ENCODE measurements at regions of chr2 and their contacts with region 1.

Region 1: DNA sequence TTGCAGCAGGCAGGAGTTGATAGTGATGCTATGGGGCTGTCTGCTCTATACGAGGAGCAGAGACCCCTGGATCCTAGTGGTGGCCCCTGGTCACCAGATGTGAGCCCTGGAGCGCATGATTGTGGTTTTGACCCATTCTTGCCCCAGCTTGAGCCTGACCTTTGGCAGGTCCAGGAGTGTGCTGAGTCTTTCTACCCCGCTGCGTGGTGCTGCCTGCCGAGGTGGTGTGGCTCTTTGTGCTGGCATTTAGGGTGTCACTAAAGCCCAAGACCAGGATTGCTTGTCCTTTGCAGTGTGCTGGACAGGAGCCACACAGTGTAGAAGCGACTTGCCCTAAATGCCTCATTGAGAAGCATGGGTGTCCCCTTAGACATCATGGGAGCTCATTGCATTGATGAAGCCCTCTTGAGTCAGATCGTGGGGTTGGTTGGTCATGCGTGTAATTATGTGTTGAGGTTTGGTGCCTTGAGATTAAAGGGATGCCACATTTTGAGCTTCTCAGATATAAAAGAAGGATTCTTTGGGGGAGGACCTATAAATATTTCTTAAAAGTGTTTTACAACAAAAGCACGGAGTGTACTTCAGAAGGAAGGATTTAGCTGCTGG is 88.3 kb downstream of the AGAP1 start:
- DNase-seq: no peak
- ATAC-seq: no peak
- H3K4me3 ChIP-seq: no peak overlapping the region
- H3K27ac ChIP-seq: no peak overlapping the region
- H3K4me1 ChIP-seq: peaks cover 5% of the 10 kb centered on the region
- H3K27me3 ChIP-seq: no peaks in the 10 kb centered on the region
- CTCF ChIP-seq: no peak
- POLR2A ChIP-seq: no peak
- RAD21 ChIP-seq: no peak

Region 2: DNA sequence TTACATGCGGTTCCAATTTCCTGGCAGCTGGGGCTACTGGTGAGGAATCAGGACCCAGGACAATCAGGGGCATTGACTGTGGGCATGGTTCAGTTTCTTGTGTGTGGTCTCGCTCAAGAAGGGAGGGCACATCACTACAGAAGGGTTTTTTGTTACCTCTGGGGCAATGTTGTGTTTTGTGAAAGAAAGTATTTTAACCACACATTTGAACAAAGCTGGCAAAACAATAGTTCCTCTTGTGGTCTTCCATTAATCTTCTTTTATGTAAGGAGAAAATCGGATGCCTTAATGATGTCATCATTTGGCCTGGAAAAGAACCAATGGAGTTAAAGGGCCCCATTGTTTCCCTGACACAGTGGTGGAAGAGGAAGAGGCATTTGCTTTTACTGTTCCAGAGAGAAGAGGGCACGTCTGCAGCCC is 432.9 kb before region 1 on chr2:
- CTCF ChIA-PET with region 1: no interaction called
- POLR2A ChIA-PET with region 1: no interaction called
- dilution Hi-C with region 1: no loop called
- in situ Hi-C with region 1: loop called (anchors 5 kb)
- intact Hi-C with region 1: no loop called
- DNase-seq: no peak
- ATAC-seq: no peak
- H3K4me3 ChIP-seq: no peak overlapping the region
- H3K27ac ChIP-seq: no peak overlapping the region
- H3K4me1 ChIP-seq: no peaks in the 10 kb centered on the region
- H3K27me3 ChIP-seq: peaks cover 57% of the 10 kb centered on the region
- CTCF ChIP-seq: no peak
- POLR2A ChIP-seq: no peak
- RAD21 ChIP-seq: no peak

Measured in IMR-90 (cell line).